ENCODE measurements at regions of chr6 and their contacts with region 1.

Region 1: GRCh38 chr6:129498950-129499842 is 210.8 kb downstream of the ARHGAP18 start:
- DNase-seq: no peak
- ATAC-seq: peak; percentile 64
- H3K4me3 Mint-ChIP-seq: no peak overlapping the region
- H3K27ac Mint-ChIP-seq: no peak overlapping the region
- H3K4me1 Mint-ChIP-seq: peaks cover 26% of the 10 kb centered on the region
- H3K27me3 Mint-ChIP-seq: no peaks in the 10 kb centered on the region
- CTCF ChIP-seq: peak; percentile 55

Region 2: DNA sequence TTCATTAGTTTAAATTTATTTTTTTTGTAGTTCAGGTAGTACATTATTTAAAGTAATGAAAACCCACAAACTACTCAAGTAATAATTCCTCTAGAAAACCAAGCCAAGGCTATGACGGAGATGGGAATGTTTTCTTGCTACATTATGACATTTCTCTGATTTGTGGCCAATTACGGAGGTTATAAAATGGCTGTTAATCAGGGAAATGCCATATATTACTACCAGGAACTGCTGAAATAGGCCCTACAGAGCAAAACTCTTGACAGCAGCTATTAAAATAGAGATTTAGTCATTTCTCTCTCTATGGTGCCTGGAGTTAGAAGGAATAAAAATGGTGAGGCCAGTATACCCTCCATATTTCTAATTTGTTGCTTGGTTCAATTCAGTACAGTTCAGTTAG is 69.2 kb before region 1 on chr6:
- CTCF ChIA-PET with region 1: no interaction called
- POLR2A ChIA-PET with region 1: no interaction called
- DNase-seq: no peak
- ATAC-seq: no peak
- H3K4me3 Mint-ChIP-seq: no peak overlapping the region
- H3K27ac Mint-ChIP-seq: no peak overlapping the region
- H3K4me1 Mint-ChIP-seq: peaks cover 8% of the 10 kb centered on the region; the same call in 1 of the 2 replicates
- H3K27me3 Mint-ChIP-seq: no peaks in the 10 kb centered on the region
- CTCF ChIP-seq: no peak

Region 3: GRCh38 chr6:129567374-129567773 is 68.2 kb after region 1 on chr6:
- CTCF ChIA-PET with region 1: interaction called, 28 read pairs
- POLR2A ChIA-PET with region 1: interaction called, 4 read pairs
- DNase-seq: peak; percentile 78
- ATAC-seq: peak; percentile 91
- H3K4me3 Mint-ChIP-seq: no peak overlapping the region
- H3K27ac Mint-ChIP-seq: no peak overlapping the region
- H3K4me1 Mint-ChIP-seq: 0 out of 2 replicates have a peak, but pooled peaks cover 2% of the 10 kb centered on the region
- H3K27me3 Mint-ChIP-seq: no peaks in the 10 kb centered on the region
- CTCF ChIP-seq: peak; percentile 49

Region 4: GRCh38 chr6:129575378-129576118 is 76.4 kb after region 1 on chr6:
- CTCF ChIA-PET with region 1: interaction called, 28 read pairs
- POLR2A ChIA-PET with region 1: no interaction called
- DNase-seq: no peak
- ATAC-seq: peak; percentile 90
- H3K4me3 Mint-ChIP-seq: no peak overlapping the region
- H3K27ac Mint-ChIP-seq: 0 out of 2 replicates have a peak overlapping the region, but pooled peaks have one; percentile 9
- H3K4me1 Mint-ChIP-seq: no peaks in the 10 kb centered on the region
- H3K27me3 Mint-ChIP-seq: no peaks in the 10 kb centered on the region
- CTCF ChIP-seq: no peak

Measured in WTC11 (cell line).